ENCODE measurements at regions of chr3 and their contacts with region 1.

Region 1: GRCh38 chr3:28050895-28051294 is 190.5 kb upstream of the CMC1 start:
- DNase-seq: peak; percentile 97
- H3K4me3 Mint-ChIP-seq: no peak overlapping the region
- H3K27ac Mint-ChIP-seq: peak overlapping the region; percentile 11
- H3K4me1 Mint-ChIP-seq: peaks cover 42% of the 10 kb centered on the region
- H3K27me3 Mint-ChIP-seq: no peaks in the 10 kb centered on the region
- CTCF ChIP-seq: no peak

Region 2: GRCh38 chr3:27976933-27977332 is 74.0 kb before region 1 on chr3:
- CTCF ChIA-PET with region 1: no interaction called
- POLR2A ChIA-PET with region 1: interaction called, 4 read pairs
- intact Hi-C with region 1: loop called (anchors 10 kb)
- DNase-seq: peak; percentile 88
- H3K4me3 Mint-ChIP-seq: no peak overlapping the region
- H3K27ac Mint-ChIP-seq: peak overlapping the region; percentile 35
- H3K4me1 Mint-ChIP-seq: peaks cover 23% of the 10 kb centered on the region
- H3K27me3 Mint-ChIP-seq: no peaks in the 10 kb centered on the region
- CTCF ChIP-seq: no peak

Region 3: GRCh38 chr3:28241221-28242160 is 190.6 kb after region 1 on chr3 and contains the start of gene CMC1:
- CTCF ChIA-PET with region 1: no interaction called
- POLR2A ChIA-PET with region 1: interaction called, 3 read pairs
- intact Hi-C with region 1: loop called (anchors 5 kb)
- DNase-seq: peak; percentile 97
- H3K4me3 Mint-ChIP-seq: peak within 1 kb of the TSS; percentile 91
- H3K27ac Mint-ChIP-seq: peak within 1 kb of the TSS; percentile 93
- H3K4me1 Mint-ChIP-seq: peaks cover 19% of the 10 kb centered on the region
- H3K27me3 Mint-ChIP-seq: no peaks in the 10 kb centered on the region
- CTCF ChIP-seq: no peak
- total RNA-seq, gene CMC1: 31.9 and 35.4 TPM in 2 replicates

Region 4: DNA sequence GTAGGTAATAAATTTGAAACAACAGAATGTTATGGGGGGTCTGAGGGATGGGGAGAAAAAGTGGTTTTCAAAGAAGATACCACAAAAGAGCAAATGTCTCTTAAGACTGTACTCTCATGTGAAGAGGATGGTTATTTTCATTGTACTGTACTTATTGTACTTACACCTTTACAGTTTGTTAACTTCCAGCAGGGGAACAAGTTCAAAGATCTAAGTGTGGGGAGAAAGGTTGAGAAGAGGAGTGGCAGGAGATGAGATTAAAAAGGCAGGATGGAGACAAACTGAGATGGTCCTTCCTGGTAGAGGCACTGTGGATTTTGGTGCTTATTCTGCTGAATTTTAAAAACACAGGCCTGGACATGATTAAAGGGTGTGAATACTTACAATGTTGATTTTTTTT is 292.2 kb after region 1 on chr3:
- CTCF ChIA-PET with region 1: no interaction called
- POLR2A ChIA-PET with region 1: no interaction called
- intact Hi-C with region 1: loop called (anchors 2 kb)
- DNase-seq: no peak
- H3K4me3 Mint-ChIP-seq: peak overlapping the region; percentile 75
- H3K27ac Mint-ChIP-seq: peak overlapping the region; percentile 52
- H3K4me1 Mint-ChIP-seq: peaks cover 17% of the 10 kb centered on the region
- H3K27me3 Mint-ChIP-seq: no peaks in the 10 kb centered on the region
- CTCF ChIP-seq: no peak

Measured in MCF 10A (cell line).